ENCODE measurements at regions of chr11 and their contacts with region 1.

Region 1: DNA sequence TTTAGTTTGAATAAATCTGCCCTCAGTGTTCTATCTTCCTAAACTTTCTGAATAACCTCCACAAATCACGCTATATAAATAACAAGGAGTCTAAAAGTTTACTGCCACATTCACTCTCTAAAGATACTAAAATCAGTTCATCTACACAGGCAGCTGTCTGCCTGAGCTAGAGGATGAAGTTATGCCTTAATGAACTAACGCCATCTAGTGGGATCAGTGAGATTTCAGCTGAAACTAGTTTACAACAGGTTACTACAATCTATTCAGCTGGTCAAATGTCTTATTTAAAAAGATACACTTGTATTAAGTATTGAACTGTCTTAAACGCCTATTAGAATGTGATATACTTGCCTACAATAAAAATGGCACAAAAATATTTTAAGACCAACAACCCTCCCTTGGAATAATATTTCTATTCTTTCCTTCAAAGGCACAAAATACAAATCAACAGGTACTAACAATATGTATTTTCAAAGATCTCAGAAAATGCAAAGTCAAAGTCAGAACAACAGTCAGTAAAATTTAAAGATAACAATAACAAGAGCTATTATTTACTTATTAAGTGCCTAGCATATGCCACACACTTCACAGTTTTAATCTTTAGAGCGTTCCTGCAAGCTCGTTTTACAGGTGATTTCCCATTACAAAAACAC is 84.1 kb downstream of the LARGE2 start:
- DNase-seq: no peak
- H3K4me3 ChIP-seq: no peak overlapping the region
- H3K27ac ChIP-seq: no peak overlapping the region
- H3K4me1 ChIP-seq: peaks cover 0 to 6% (median 2%) of the 10 kb centered on the region in 4 experiments; a peak in 2 of 7 replicates
- H3K27me3 ChIP-seq: no peaks in the 10 kb centered on the region
- CTCF ChIP-seq: peak in 2 of 3 experiments; percentile 77 to 79; a peak in 3 of 4 replicates
- EP300 ChIP-seq: no peak
- POLR2A ChIP-seq: no peak
- RAD21 ChIP-seq: peak; percentile 89 to 95

Region 2: GRCh38 chr11:45899448-45900173 is 106.9 kb before region 1 on chr11:
- CTCF ChIA-PET with region 1: interaction called, 11 read pairs
- POLR2A ChIA-PET with region 1: no interaction called
- DNase-seq: peak; percentile 72 to 90
- H3K4me3 ChIP-seq: peak overlapping the region; percentile 50 to 66 (median 59); a peak in 7 of 8 replicates
- H3K27ac ChIP-seq: peak overlapping the region; percentile 81; the same call in 1 of the 2 replicates
- H3K4me1 ChIP-seq: peaks cover 0 to 28% (median 19%) of the 10 kb centered on the region in 4 experiments; a peak in 5 of 7 replicates
- H3K27me3 ChIP-seq: peaks cover 0 to 5% (median 2%) of the 10 kb centered on the region in 4 experiments; a peak in 1 of 7 replicates
- CTCF ChIP-seq: no peak
- EP300 ChIP-seq: peak in 1 of 2 experiments; percentile 98; a peak in 1 of 3 replicates
- POLR2A ChIP-seq: no peak
- RAD21 ChIP-seq: peak in 1 of 2 experiments; percentile 26; a peak in 2 of 4 replicates

Region 3: DNA sequence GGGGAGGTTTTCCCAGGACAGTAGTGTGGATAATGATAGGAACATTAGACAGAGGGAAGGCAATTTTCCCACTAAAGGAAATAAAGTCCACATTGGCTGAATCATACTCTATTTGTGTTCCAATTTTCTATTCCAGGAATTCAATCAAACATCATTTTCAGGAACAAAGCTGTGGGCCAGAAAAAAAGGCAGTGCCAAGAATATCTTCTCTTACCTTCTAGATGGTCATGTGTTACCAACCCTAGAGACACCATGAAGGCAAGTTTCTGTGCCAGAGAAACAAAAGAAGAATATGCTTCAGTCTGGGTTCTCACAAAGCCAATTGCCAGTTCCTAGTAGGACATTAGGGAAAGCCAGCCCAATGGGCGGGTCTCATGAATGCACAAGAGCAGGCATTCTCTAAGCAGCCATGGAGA is 56.5 kb before region 1 on chr11:
- CTCF ChIA-PET with region 1: interaction called, 12 read pairs
- POLR2A ChIA-PET with region 1: no interaction called
- DNase-seq: no peak
- H3K4me3 ChIP-seq: no peak overlapping the region
- H3K27ac ChIP-seq: no peak overlapping the region
- H3K4me1 ChIP-seq: no peaks in the 10 kb centered on the region
- H3K27me3 ChIP-seq: no peaks in the 10 kb centered on the region
- CTCF ChIP-seq: no peak
- EP300 ChIP-seq: no peak
- POLR2A ChIP-seq: no peak
- RAD21 ChIP-seq: no peak

Region 4: DNA sequence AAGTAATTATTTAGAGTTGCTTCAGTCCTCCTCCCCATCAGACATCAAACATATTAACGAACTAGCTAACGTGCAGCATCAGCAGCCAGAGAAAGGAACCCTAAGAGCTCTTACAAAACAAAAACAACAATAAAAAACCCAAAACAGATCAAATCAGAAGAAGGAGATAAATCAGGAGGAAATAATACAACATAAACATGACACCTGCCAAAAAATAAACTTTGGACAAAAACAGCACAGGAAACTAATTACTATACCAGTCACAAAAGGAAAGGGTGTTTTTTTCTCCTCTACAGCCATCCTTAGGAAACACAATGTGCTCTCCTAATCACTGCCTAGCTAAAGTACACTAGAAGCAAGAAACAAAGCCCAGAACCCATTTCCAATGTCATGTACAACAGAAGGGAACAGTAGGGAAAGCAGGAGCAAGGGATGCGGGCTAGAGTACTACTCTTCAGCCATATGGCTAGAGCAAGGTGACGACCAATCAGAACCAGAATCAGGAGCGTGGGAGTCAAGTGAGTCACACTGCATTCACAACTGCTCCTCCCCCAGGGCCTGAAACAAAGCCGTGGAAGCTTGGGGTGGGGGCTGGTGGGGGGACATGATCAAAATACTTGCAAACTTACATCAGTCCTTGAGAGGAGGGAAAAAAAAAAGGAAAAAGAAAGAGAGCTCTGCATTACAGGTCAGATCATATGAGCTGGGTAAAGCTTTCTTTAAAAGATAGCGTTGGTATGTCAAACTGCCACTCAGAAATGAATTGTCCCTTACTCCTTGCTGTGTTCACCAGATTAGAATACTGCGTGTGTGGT is 23.7 kb before region 1 on chr11:
- CTCF ChIA-PET with region 1: interaction called, 18 read pairs
- POLR2A ChIA-PET with region 1: interaction called, 37 read pairs
- DNase-seq: peak; percentile 60 to 84
- H3K4me3 ChIP-seq: peak overlapping the region in 1 of 4 experiments; percentile 40; a peak in 4 of 8 replicates
- H3K27ac ChIP-seq: peak overlapping the region; percentile 58; the same call in 1 of the 2 replicates
- H3K4me1 ChIP-seq: peaks cover 5 to 9% (median 9%) of the 10 kb centered on the region in 4 experiments; a peak in 5 of 7 replicates
- H3K27me3 ChIP-seq: no peaks in the 10 kb centered on the region
- CTCF ChIP-seq: no peak
- EP300 ChIP-seq: no peak
- POLR2A ChIP-seq: no peak
- RAD21 ChIP-seq: no peak

Region 5: DNA sequence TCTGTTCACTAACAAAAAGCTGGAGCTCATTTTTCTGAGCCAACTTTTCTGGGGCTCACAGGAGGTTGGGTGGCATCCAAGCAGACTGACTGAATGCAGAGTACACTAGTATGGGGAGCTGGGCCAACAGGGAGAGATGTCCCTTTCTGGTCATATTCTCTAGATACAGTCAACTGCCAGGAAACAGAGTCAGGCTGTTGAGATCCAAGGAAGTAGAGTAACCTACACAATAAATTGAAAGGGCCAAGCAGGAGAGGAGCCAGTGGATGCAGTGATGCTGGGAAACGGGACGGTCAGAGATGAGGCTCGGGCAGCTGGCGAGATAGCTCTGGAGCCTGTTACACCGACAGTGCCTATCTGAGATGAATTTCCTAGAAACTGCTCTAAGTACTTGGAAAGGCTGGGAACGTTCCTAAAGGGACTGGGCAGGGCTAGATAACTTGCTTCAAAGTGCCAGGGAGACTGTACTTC is 13.0 kb before region 1 on chr11:
- CTCF ChIA-PET with region 1: interaction called, 30 read pairs
- POLR2A ChIA-PET with region 1: interaction called, 24 read pairs
- DNase-seq: no peak
- H3K4me3 ChIP-seq: no peak overlapping the region
- H3K27ac ChIP-seq: no peak overlapping the region
- H3K4me1 ChIP-seq: peaks cover 18 to 38% (median 29%) of the 10 kb centered on the region in 4 experiments; a peak in 6 of 7 replicates
- H3K27me3 ChIP-seq: no peaks in the 10 kb centered on the region
- CTCF ChIP-seq: no peak
- EP300 ChIP-seq: no peak
- POLR2A ChIP-seq: no peak
- RAD21 ChIP-seq: no peak

Region 6: GRCh38 chr11:46119352-46120216 is 113.0 kb after region 1 on chr11:
- CTCF ChIA-PET with region 1: interaction called, 11 read pairs
- POLR2A ChIA-PET with region 1: no interaction called
- DNase-seq: no peak
- H3K4me3 ChIP-seq: peak overlapping the region; percentile 82 to 97 (median 88)
- H3K27ac ChIP-seq: peak overlapping the region; percentile 54
- H3K4me1 ChIP-seq: peaks cover 0 to 6% (median 0%) of the 10 kb centered on the region in 4 experiments; a peak in 4 of 7 replicates
- H3K27me3 ChIP-seq: no peaks in the 10 kb centered on the region
- CTCF ChIP-seq: no peak
- EP300 ChIP-seq: no peak
- POLR2A ChIP-seq: no peak
- RAD21 ChIP-seq: no peak

Measured in H1 (cell line).